ENCODE measurements at regions of chr7 and their contacts with region 1.

Region 1: DNA sequence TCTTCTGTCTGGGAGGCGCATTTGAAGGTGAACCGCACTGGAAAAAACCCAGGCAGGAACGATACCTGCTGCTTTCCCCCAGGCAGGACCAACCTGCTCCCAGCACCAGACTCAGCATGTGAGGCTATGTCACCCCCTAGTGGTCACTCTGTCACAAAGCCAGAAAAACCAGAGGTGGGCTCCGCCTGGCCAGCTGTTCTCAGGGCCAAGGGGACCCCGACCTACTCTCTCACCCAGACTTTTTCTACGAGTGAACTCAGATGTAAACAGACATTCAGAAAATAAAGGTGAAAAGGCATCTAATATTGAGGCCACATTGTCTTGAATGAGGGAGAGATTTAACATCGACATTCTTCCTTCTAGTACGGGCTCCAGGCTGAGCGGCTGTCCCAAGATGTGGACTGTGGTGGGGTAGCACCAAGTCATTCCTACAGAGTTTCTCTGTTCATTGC is 117.3 kb downstream of the PRKAG2 start:
- DNase-seq: no peak
- H3K4me3 ChIP-seq: no peak overlapping the region
- H3K27me3 ChIP-seq: peaks cover 16% of the 10 kb centered on the region
- CTCF ChIP-seq: peak; percentile 93

Region 2: DNA sequence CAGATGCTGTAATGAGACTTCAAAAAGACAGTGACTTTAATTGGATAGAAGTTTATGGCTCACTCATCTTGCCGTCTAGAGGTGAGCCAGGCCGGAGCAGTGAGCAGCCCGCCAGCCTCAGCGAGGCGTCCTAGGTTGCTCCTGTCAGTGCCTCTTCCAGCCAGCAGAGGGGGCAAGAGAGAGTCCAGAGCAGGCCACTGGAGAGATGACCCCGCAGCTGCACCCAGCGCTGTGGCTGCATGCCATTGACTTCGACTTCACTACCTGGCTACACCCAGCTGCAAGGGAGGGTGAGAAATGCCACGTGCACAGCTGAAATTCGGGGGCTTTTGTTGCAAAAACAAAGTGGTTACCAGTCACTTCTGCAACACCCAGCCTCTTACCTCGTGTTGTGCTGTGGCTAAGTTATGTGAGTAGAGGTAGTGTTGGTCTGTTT is 391.5 kb before region 1 on chr7:
- CTCF ChIA-PET with region 1: interaction called, 24 read pairs
- POLR2A ChIA-PET with region 1: no interaction called
- DNase-seq: no peak
- H3K4me3 ChIP-seq: no peak overlapping the region
- H3K27me3 ChIP-seq: no peaks in the 10 kb centered on the region
- CTCF ChIP-seq: peak; percentile 98

Region 3: GRCh38 chr7:151570366-151570915 is 189.2 kb before region 1 on chr7:
- CTCF ChIA-PET with region 1: interaction called, 84 read pairs
- POLR2A ChIA-PET with region 1: interaction called, 3 read pairs
- DNase-seq: no peak
- H3K4me3 ChIP-seq: no peak overlapping the region
- H3K27me3 ChIP-seq: no peaks in the 10 kb centered on the region
- CTCF ChIP-seq: peak; percentile 50

Region 4: DNA sequence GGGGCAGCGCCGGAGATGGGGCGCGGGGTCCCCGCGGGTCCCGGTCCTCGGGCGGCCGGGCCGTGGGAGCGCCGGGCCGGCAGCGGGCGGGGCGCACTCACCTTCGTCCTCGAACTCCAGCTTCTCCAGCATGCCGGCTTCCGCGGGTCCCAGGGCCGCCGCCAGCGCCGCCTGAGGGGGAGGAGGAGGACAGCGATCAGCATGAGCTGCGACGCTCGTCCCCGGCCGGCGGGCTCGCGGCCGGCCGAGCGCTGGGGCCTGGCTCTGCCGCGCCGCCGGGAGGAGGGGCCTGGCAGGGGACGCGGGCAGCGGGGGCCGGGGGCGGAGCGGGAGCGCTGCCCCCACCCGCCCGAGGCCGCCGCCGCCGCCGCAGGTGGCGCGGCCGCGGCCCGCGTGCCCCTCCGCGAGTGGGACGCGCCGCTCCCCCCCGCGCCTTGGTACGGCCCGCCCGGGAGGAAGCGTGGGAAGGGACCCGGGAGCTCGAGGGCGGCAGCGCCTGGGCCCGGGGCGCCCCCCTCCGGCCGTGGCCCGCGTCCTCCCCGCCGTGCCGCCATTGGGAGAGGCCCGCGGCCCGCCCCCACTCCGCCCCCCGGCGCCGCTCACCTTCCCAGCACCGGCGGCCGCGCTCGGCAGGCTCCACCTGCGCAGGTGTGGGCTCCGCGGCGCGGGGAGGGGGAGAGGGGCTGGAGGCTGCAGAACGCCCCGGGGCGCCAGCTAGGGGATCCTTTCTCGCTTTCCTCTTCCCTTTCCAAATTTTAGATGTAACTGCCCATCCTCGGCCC is 127.5 kb before region 1 on chr7:
- CTCF ChIA-PET with region 1: interaction called, 29 read pairs
- POLR2A ChIA-PET with region 1: no interaction called
- DNase-seq: no peak
- H3K4me3 ChIP-seq: peak overlapping the region; percentile 73
- H3K27me3 ChIP-seq: no peaks in the 10 kb centered on the region
- CTCF ChIP-seq: no peak

Region 5: DNA sequence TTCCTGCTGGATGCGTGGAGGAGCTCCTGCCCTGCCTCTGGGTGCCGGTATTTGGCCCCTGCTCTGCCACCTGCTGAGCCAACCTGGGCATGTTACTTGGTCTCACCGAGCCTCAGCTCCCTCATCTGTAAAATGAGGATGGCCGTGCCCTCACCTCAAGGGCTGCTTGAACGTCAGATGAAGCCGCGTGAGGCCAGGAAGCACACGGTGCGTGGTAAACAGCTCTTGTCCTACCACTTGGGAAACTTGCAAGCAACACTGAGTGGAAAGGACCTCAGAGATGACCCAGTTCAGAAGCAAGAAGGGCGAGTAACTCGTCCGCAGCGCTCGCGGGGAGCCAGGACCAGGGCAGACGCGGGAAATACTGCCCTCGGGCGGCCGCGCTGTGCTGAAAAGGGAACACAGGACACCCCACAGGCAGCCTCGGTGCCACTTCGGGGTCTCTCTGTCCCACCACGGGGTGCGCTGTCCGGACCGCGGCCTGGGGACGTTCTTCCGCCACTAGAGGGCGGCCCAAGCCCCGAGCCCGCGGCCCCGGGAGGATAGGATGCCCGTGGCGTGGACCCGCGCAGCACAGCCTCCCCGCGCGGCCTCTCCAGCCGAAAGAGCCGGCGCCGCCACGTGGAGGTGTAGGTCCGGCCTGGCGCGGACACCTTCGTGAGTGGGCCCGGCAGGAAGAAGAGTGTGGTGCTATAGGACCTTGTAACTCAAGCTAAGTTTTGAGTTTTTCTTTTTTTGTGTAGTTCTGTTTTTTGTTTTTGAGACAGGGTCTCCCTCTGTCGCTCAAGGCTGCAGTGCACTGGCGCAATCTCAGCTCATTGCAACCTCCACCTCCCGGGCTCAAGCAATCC is 23.2 kb after region 1 on chr7:
- CTCF ChIA-PET with region 1: interaction called, 11 read pairs
- POLR2A ChIA-PET with region 1: no interaction called
- DNase-seq: no peak
- H3K4me3 ChIP-seq: peak overlapping the region; percentile 21; the same call in 1 of the 2 replicates
- H3K27me3 ChIP-seq: peaks cover 14% of the 10 kb centered on the region
- CTCF ChIP-seq: peak; percentile 89

Region 6: GRCh38 chr7:151838861-151839391 is 79.3 kb after region 1 on chr7:
- CTCF ChIA-PET with region 1: no interaction called
- POLR2A ChIA-PET with region 1: no interaction called
- DNase-seq: no peak
- H3K4me3 ChIP-seq: no peak overlapping the region
- H3K27me3 ChIP-seq: no peaks in the 10 kb centered on the region
- CTCF ChIP-seq: no peak

Region 7: DNA sequence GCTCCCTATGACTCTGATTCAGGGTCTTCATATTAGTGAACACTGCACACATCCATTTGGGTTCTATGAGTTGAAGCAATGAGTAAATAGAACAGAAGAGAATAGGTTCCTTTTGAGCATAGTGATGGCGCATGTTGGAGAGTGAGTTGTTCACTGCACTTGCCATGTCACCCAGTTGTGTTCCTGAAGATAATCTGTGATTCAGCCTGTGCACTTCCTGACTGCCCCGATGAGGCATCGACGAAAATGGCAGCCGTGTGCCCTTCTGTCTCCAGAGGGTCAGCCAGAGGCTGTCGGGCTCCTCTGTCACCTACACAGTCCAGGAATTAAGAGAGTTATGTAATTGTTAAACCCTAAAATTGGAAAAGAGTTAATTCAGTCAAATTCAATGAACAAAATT is 360.6 kb after region 1 on chr7:
- CTCF ChIA-PET with region 1: no interaction called
- POLR2A ChIA-PET with region 1: no interaction called
- DNase-seq: no peak
- H3K4me3 ChIP-seq: no peak overlapping the region
- H3K27me3 ChIP-seq: no peaks in the 10 kb centered on the region
- CTCF ChIP-seq: no peak